Mammary epithelial cell (primary cell): ENCODE measurements at regions of chr15 and their contacts with region 1.

Region 1: GRCh38 chr15:98067339-98067738 is 106.8 kb downstream of the ARRDC4 start:
- DNase-seq: no peak
- H3K4me3 ChIP-seq: no peak overlapping the region
- H3K27ac ChIP-seq: no peak overlapping the region
- H3K4me1 ChIP-seq: peaks cover 12% of the 10 kb centered on the region
- H3K27me3 ChIP-seq: no peaks in the 10 kb centered on the region
- CTCF ChIP-seq: no peak

Region 2: GRCh38 chr15:98017150-98017964 is 50.0 kb before region 1 on chr15:
- CTCF ChIA-PET with region 1: no interaction called
- dilution Hi-C with region 1: loop called (anchors 10 kb)
- in situ Hi-C with region 1: no loop called
- intact Hi-C with region 1: no loop called
- DNase-seq: no peak
- H3K4me3 ChIP-seq: no peak overlapping the region
- H3K27ac ChIP-seq: no peak overlapping the region
- H3K4me1 ChIP-seq: no peaks in the 10 kb centered on the region
- H3K27me3 ChIP-seq: no peaks in the 10 kb centered on the region
- CTCF ChIP-seq: no peak

Region 3: DNA sequence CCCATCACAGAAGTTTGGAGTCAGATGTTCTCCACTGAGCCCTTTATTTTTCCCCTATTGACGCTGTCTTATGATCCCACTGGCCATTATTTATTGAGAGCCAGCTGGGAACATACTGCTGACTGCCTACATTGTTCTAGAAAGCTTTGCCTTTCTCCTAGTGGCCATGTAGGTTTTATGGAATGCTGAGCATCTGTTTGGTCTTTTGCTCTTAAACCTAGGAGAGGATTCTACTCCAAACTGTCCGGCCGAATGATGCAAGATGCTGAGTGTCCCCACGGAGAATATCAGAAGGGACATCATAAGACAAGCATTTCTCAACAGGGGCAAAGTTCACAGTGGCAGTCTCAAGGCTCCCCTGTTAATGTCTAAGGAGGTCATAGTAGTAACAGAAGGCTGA is 64.6 kb after region 1 on chr15:
- CTCF ChIA-PET with region 1: no interaction called
- dilution Hi-C with region 1: loop called (anchors 5 kb)
- in situ Hi-C with region 1: no loop called
- intact Hi-C with region 1: no loop called
- DNase-seq: no peak
- H3K4me3 ChIP-seq: no peak overlapping the region
- H3K27ac ChIP-seq: no peak overlapping the region
- H3K4me1 ChIP-seq: peaks cover under 1% of the 10 kb centered on the region
- H3K27me3 ChIP-seq: no peaks in the 10 kb centered on the region
- CTCF ChIP-seq: no peak